Left cardiac atrium (tissue), 4 donors: ENCODE measurements at regions of chr20 and their contacts with region 1.

Region 1: DNA sequence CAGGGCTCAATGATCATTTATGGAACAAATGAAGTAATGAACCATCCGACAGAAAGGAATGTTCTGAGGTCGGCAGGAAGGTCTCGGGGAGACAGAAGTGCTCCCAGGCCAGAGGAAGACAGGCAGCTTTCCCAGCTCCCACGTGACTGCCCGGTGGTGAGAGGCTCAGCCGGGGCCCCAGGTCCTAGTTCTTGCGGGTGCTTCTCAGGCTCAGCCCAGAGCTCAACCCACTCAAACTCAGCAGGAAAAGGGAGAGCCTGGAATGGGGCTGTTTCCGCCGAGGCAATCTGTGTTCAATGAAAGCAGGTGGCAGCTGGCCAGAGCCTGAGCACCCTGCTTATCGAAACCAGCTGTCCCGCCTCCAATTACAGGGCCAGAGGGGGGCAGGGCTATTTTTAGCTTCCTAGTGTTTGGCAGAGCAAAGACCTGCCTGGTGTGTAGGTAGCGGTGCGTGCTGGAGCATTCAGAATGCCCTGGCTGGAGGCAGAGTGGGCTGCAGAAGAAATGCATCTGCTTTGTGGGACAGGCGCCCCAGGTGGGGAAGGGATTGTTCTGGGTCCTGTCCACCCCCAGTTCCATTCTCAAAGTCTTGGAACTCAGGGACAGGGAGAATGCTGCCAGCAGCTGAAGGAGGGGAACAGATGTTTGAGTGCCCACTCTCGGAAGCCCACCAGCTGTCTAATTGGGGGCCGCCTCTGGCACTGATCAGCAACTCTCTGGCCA is 145.1 kb downstream of the PREX1 start:
- DNase-seq: peak; percentile 92
- ATAC-seq: peak; percentile 84 to 85

Region 2: DNA sequence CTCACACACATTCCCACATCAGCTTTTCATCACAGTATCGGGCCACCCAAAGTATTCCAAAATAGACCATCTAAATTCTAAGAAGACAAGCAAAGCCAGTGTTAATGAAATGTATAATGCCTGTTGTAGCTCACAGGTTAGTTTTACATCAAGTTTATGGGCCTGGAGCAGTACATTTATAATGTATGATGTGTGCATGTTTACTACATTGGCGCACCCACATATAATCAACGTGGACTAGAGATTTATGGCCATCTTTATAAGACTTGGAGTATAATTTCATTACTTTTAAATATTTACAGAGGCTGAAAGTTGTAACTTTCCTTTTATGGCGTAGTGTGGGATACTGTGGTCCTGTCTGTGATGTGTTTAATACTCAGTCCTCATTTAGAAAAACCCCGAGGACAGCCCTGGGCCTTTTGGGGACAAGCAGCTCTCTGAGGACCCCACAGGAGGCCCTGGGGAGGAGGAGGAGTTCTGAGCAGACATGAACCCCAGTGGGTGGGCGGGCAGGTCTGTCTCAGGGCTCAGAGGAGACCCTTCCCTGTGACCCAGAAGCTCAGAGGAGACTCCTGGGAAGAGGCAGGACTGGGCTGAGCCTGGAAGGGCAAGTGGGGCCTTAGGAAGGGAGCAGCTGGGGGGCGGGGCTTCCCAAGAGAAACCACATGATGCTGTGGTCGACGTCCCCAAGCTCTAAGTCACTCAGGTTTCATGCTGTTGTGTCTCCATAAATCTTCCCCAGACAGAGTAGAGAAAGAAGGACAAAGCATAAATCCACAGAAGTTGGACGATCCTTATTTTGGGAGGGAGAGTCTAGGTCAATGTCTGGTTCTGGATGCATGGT is 87.0 kb before region 1 on chr20:
- intact Hi-C with region 1: no loop called
- DNase-seq: no peak
- ATAC-seq: no peak

Region 3: DNA sequence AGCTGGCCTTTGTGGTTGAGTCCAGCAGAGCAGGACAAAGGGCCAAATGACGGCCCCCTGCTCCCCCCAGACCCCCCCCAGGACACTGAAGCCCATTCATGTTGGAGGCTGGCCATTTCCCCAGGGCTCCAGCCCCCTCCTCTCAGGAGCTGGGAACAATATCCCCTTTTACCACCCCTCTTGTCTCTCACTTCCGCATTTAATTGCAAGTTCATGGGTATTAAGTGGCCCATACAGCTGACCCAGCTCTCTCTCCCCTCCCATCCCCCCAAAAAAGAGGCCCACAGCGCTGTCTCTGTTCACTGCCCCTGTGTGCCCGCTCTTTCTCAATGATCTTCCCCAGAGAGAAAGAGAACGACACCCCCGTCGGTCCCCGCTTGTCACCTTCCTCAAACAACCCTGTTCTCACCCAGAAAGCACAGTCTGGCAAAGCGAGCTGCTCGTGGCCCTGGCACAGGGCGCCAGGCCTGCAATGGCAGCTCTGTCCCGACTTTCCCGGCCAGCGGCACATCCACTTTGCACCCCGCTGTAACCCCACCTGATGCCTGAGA is 114.7 kb after region 1 on chr20:
- intact Hi-C with region 1: loop called in 1 of 2 experiments (anchors 5 kb)
- DNase-seq: peak; percentile 42
- ATAC-seq: peak; percentile 47 to 72

Region 4: DNA sequence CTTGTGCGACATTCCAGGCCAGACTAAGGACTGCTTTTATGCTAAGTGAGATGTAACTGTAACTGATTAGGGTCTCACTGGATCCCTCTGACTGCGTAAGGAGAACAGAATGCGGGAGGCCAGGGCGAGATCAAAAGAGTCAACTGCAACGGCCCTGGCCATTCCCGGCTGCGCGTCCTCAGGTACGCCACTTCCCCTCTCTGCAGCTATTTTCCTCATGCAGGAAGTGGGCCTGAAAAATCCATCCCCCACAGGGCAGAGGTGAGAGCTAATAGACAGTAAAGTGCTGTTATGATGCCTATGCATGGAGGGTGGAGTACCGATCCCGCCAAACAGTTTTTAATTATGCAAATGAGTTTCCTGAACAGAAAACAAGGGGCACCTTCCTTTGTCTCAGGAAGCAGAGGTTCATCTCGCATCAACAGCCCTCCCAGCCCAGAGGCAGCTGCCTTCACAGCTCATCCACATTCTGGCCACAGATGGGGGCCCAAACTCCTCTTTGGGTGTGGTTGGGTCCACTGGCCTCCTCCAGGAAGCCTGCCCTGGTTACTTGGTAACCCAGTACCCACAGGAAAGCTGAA is 135.8 kb after region 1 on chr20:
- intact Hi-C with region 1: loop called in 1 of 2 experiments (anchors 10 kb)
- DNase-seq: no peak
- ATAC-seq: peak in 1 of 2 donors; percentile 14